OCI-LY7 (cell line): ENCODE measurements at regions of chr2 and their contacts with region 1.

Region 1: DNA sequence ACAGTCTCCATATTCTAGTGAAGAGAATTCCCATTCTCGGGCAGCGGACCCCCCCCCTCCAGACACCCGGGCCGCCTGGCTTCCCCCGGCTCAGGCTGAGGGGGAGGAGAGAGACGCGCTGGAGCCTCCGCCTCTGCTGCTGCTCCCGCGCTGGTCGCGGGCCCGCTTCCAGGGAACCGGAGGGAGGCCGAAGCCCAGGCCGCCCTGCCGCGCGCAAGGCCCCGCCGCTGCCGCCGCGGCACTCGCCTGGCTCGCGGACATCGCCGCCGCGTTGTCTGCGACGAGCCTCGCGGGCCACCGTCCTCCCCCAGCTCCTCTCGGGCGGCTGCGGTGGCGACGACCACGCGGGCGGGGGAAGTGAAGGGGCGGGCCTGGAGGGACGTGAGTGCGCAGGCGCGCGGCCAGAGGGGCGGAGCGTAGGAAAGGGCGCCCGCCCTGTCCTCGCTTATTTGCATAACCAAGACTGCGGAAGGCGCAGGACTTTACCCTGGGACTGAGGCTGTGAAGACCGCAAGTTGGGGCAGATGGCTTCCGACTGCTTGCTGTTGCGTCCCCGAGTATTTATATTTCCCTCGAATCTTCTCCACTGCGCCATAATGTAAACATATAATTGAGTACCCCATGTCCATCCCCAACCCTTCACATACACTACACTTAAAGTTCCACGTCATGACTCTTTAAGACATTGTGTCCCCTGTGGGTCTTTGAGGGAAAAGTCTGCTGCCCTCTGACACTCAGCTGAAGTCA is at the start of gene ARL5A:
- DNase-seq: peak; percentile 94
- H3K4me3 ChIP-seq: peak within 1 kb of the TSS; percentile 99
- H3K27ac ChIP-seq: peak within 1 kb of the TSS; percentile 57
- H3K4me1 ChIP-seq: peaks cover 34% of the 10 kb centered on the region
- CTCF ChIP-seq: no peak
- total RNA-seq, gene ARL5A: 91.4 and 107 TPM in 2 replicates

Region 2: GRCh38 chr2:151840216-151841046 is 12.1 kb after region 1 on chr2:
- CTCF ChIA-PET with region 1: interaction called, 10 read pairs
- POLR2A ChIA-PET with region 1: interaction called, 80 read pairs
- intact Hi-C with region 1: no loop called
- DNase-seq: peak; percentile 37
- H3K4me3 ChIP-seq: no peak overlapping the region
- H3K27ac ChIP-seq: peak overlapping the region; percentile 33
- H3K4me1 ChIP-seq: peaks cover 61% of the 10 kb centered on the region
- CTCF ChIP-seq: no peak

Region 3: GRCh38 chr2:151845884-151846283 is 17.6 kb after region 1 on chr2:
- CTCF ChIA-PET with region 1: interaction called, 10 read pairs
- POLR2A ChIA-PET with region 1: interaction called, 80 read pairs
- intact Hi-C with region 1: no loop called
- DNase-seq: no peak
- H3K4me3 ChIP-seq: no peak overlapping the region
- H3K27ac ChIP-seq: no peak overlapping the region
- H3K4me1 ChIP-seq: peaks cover 40% of the 10 kb centered on the region
- CTCF ChIP-seq: no peak

Region 4: DNA sequence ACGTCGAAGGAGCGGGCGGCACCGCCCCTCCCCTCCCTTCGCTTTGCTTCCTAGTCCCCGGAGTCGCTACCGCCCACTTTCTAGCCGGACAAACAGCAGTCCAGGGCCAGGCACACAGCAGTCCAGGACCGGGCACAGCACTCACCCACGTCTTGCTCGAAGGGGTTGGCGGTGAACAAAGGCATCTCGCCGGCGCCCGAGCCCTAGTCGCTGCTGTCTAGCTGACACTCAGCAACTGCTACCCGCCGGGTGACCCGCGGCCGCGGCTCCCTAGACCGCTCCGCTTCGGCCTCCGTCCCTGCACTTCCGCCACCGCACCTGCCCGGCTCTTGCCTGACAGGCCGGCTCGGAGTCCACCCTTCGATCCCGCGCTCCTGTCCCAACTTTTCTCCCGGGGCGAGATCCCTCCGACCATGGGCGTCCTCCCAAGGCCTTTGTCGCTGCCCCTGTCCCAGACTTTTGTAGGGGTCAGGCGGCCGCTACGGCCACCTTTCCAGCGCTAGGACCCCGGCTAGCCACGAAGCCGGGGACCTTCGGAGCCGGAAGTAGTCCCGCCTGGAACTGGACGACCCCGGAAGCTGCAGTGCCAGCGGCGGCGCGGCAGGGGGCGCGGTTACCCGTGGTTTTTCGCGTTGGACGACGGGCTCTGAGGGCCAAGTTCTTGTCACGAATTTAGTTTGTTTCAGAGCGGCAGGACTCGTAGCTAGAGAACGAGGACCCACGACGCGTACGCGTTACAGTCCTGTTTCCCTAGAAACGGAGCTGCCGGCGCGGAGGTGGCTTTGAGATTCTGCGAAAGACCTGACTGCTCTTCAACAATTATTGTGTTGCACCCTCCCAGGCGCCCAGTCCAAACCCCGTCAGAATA is 347.4 kb after region 1 on chr2 and contains the start of gene STAM2:
- CTCF ChIA-PET with region 1: no interaction called
- POLR2A ChIA-PET with region 1: no interaction called
- intact Hi-C with region 1: loop called (anchors 10 kb)
- DNase-seq: peak; percentile 91
- H3K4me3 ChIP-seq: peak within 1 kb of the TSS; percentile 96
- H3K27ac ChIP-seq: peak within 1 kb of the TSS; percentile 67
- H3K4me1 ChIP-seq: peaks cover 16% of the 10 kb centered on the region
- CTCF ChIP-seq: peak; percentile 84
- total RNA-seq, gene STAM2: 17.7 and 19.6 TPM in 2 replicates